Activated CD8-positive, alpha-beta T cell treated with anti-CD3 and anti-CD28 coated beads, Interleukin-2, amount 10 ng/mL, durations not matched to agents 7 days and 5 days (primary cell): ENCODE measurements at regions of chr14 and their contacts with region 1.

Region 1: GRCh38 chr14:97978341-97978740 is 1181.2 kb downstream of the VRK1 start:
- DNase-seq: peak; percentile 86
- ATAC-seq: peak; percentile 90
- H3K4me3 Mint-ChIP-seq: peak overlapping the region; percentile 93
- H3K27ac Mint-ChIP-seq: peak overlapping the region; percentile 95
- H3K4me1 Mint-ChIP-seq: peaks cover 52% of the 10 kb centered on the region
- H3K27me3 Mint-ChIP-seq: no peaks in the 10 kb centered on the region

Region 2: GRCh38 chr14:97707603-97708002 is 270.7 kb before region 1 on chr14:
- CTCF ChIA-PET with region 1: interaction called, 25 read pairs
- POLR2A ChIA-PET with region 1: no interaction called
- DNase-seq: peak; percentile 66
- ATAC-seq: peak; percentile 69
- H3K4me3 Mint-ChIP-seq: peak overlapping the region; percentile 23
- H3K27ac Mint-ChIP-seq: peak overlapping the region; percentile 93
- H3K4me1 Mint-ChIP-seq: peaks cover 83% of the 10 kb centered on the region
- H3K27me3 Mint-ChIP-seq: no peaks in the 10 kb centered on the region

Region 3: GRCh38 chr14:98010784-98011183 is 32.4 kb after region 1 on chr14:
- CTCF ChIA-PET with region 1: interaction called, 13 read pairs
- POLR2A ChIA-PET with region 1: no interaction called
- DNase-seq: peak; percentile 35
- ATAC-seq: no peak
- H3K4me3 Mint-ChIP-seq: no peak overlapping the region
- H3K27ac Mint-ChIP-seq: no peak overlapping the region
- H3K4me1 Mint-ChIP-seq: peaks cover 37% of the 10 kb centered on the region
- H3K27me3 Mint-ChIP-seq: no peaks in the 10 kb centered on the region

Region 4: DNA sequence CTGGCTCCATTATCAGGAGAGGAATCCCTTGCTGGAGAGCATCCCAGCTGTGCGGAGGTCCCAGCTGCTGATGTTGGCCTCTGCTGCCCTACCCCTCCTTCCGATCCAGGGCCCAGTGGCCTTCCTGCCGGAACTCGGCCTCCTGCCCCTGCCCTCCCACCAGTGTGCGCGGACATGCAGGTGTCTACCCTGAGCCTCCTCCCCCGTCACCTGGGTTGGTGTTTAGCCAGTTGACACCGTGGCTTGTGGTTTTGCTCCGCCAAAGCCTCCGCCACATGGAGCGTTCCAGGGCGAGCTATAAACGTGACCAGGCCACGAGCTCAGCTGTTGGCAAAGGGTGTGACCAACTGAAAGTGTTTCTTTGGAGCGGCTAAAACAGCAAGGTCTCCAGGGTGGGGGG is 189.4 kb after region 1 on chr14:
- CTCF ChIA-PET with region 1: interaction called, 10 read pairs
- POLR2A ChIA-PET with region 1: interaction called, 10 read pairs
- DNase-seq: peak; percentile 59
- ATAC-seq: peak; percentile 52
- H3K4me3 Mint-ChIP-seq: peak overlapping the region; percentile 26
- H3K27ac Mint-ChIP-seq: peak overlapping the region; percentile 50
- H3K4me1 Mint-ChIP-seq: peaks cover 84% of the 10 kb centered on the region
- H3K27me3 Mint-ChIP-seq: no peaks in the 10 kb centered on the region

Region 5: GRCh38 chr14:98189062-98189461 is 210.7 kb after region 1 on chr14:
- CTCF ChIA-PET with region 1: interaction called, 7 read pairs
- POLR2A ChIA-PET with region 1: interaction called, 12 read pairs
- DNase-seq: peak; percentile 68
- ATAC-seq: peak; percentile 69
- H3K4me3 Mint-ChIP-seq: peak overlapping the region; percentile 58
- H3K27ac Mint-ChIP-seq: peak overlapping the region; percentile 92
- H3K4me1 Mint-ChIP-seq: peaks cover 96% of the 10 kb centered on the region
- H3K27me3 Mint-ChIP-seq: no peaks in the 10 kb centered on the region

Region 6: DNA sequence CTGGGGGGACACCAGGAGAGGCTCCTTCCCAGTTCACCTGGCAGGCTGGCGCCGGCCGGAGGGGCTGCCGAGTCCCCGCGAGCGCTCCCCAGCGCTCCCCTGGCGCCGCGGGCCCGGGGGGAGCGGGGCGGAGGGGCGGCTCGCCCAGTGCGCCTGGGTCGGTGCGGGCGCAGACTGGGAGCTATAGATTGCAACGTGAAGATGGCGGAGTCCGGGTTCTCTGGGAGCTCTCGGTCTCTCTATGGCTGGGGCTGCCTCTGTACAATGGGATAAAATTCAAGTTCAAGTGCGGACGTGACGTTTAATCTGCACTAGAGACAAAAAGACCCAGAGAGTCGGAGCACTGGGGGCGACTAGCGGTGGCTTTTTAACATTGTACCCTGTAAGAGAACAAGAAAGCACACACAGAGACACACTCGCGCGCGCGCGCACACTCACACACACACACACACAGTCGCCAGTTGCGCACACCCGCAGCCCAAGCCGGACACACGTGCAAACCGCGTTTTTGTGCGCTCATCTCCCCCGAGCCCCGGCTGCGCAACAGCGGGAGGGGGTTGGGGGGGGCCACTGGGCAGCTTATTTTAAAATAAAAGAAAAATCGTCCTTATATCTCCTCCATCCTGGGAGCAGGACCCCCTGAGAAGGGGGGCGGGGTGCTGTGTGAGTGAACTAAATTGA is 1293.8 kb after region 1 on chr14 and contains the start of gene BCL11B:
- CTCF ChIA-PET with region 1: interaction called, 6 read pairs
- POLR2A ChIA-PET with region 1: interaction called, 16 read pairs
- DNase-seq: peak; percentile 96
- ATAC-seq: peak; percentile 74
- H3K4me3 Mint-ChIP-seq: peak within 1 kb of the TSS; percentile 88
- H3K27ac Mint-ChIP-seq: peak within 1 kb of the TSS; percentile 93
- H3K4me1 Mint-ChIP-seq: peaks cover 27% of the 10 kb centered on the region
- H3K27me3 Mint-ChIP-seq: peaks cover 17% of the 10 kb centered on the region
- total RNA-seq, gene BCL11B: 68.6 to 70.6 TPM